ENCODE measurements at regions of chr5 and their contacts with region 1.

Region 1: DNA sequence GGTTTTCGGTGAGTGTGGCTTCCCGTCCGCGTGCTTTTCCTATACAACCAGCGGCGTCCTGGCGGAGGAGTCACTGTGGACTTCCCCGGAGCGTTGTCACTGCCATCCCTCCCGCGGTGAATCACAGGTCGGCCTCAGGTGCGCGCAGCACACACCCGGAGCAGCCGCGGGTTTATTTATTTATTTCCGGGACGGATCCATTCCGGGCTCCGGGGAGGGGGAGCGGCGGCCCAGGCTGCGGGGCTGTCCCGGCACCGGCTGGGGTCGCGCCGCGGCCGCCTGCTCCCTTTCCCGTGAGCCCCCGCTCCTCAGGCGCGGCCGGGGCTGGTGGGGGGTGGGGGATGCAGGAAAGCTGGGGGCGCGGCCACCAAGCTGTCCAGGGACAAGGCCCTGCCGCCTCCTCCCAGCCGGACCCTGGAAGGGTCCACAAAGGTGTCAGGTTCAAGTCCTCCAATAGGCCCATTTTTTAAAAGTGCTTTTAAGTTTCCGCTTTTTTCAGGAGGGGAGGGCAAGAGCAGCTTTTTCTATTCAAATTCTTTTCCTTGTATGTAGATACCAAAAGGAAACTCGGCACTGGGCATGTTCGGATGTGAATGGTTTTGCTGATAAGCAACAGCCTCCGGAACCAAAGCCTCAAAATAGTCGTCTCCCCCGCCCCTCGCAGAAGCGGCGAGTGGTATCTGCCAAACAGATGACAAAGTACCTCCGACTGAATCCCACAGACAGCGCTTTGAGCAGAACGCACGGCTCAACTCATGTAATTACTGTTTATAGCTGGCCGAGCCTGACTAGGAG is 192.5 kb downstream of the CD180 start:
- DNase-seq: peak; percentile 71 to 91 (median 87)
- ATAC-seq: peak; percentile 91
- H3K4me3 ChIP-seq: peak overlapping the region; percentile 97
- H3K4me3 Mint-ChIP-seq: peak overlapping the region; percentile 92 to 99 (median 97)
- H3K27ac ChIP-seq: peak overlapping the region; percentile 75
- H3K27ac Mint-ChIP-seq: peak overlapping the region; percentile 93 to 98 (median 95)
- H3K4me1 ChIP-seq: peaks cover 7 to 28% of the 10 kb centered on the region in 2 donors
- H3K4me1 Mint-ChIP-seq: peaks cover 25 to 62% (median 55%) of the 10 kb centered on the region in 7 donors
- H3K27me3 ChIP-seq: no peaks in the 10 kb centered on the region
- H3K27me3 Mint-ChIP-seq: no peaks in the 10 kb centered on the region

Region 2: GRCh38 chr5:66144074-66144833 is 859.9 kb before region 1 on chr5 and contains the start of gene SREK1:
- CTCF ChIA-PET with region 1: no interaction called
- POLR2A ChIA-PET with region 1: no interaction called
- intact Hi-C with region 1: loop called in 1 of 2 experiments (anchors 1 kb)
- DNase-seq: peak; percentile 84 to 90 (median 89)
- ATAC-seq: peak; percentile 91
- H3K4me3 ChIP-seq: peak within 1 kb of the TSS; percentile 80
- H3K4me3 Mint-ChIP-seq: peak within 1 kb of the TSS; percentile 91 to 100 (median 98)
- H3K27ac ChIP-seq: peak within 1 kb of the TSS; percentile 98
- H3K27ac Mint-ChIP-seq: peak within 1 kb of the TSS; percentile 99 to 100 (median 100)
- H3K4me1 ChIP-seq: peaks cover 21 to 34% of the 10 kb centered on the region in 2 donors
- H3K4me1 Mint-ChIP-seq: peaks cover 22 to 60% (median 47%) of the 10 kb centered on the region in 7 donors
- H3K27me3 ChIP-seq: no peaks in the 10 kb centered on the region
- H3K27me3 Mint-ChIP-seq: no peaks in the 10 kb centered on the region
- total RNA-seq, gene SREK1: 68.2 to 143 (median 85.8) TPM

Region 3: DNA sequence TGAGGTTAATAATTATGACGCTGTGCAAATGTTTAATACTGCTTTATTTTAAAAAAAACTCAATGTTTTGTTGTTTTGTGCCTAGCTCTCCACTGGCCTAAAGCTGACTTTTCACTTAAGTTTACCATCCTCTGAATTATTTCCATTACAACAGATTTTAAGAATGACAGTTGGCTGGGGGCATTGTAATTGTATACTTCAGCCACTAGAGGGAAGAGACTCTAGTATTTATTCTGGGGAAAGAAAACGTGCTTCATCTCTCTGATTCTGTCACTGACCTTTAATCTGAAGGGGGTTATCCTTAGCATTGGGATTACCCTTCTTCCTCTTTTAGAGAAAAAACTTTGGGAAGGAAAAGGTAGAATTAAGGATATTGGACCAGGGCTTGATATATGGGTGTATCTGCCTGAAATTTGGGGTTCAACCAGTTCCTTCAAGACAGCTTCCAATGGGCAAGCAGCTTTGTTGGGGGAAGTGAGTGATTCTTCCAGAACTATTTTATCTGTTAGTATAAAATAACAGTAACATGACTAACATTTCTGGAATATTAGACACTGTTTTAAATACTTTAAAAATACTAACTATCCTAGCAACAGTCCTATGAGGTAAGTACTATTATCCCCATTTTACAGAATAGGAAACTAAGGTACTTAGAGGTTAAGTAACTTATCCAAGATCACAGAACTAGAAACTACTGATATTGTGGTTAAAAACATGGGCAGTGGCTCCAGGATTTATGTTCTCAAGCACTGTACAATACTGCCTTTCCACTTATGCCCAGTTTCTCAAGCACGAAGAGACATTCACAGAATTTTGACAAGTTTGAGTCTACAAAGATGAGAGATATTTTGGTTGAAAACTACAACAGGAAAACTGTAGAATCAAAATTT is 15.9 kb before region 1 on chr5:
- CTCF ChIA-PET with region 1: interaction called, 9 read pairs
- POLR2A ChIA-PET with region 1: interaction called, 5 read pairs
- intact Hi-C with region 1: loop called (anchors 1 kb)
- DNase-seq: peak in 6 of 9 donors; percentile 15 to 52 (median 40)
- ATAC-seq: peak; percentile 80
- H3K4me3 ChIP-seq: no peak overlapping the region
- H3K4me3 Mint-ChIP-seq: no peak overlapping the region
- H3K27ac ChIP-seq: no peak overlapping the region
- H3K27ac Mint-ChIP-seq: no peak overlapping the region
- H3K4me1 ChIP-seq: no peaks in the 10 kb centered on the region
- H3K4me1 Mint-ChIP-seq: peaks cover 0 to 17% (median 5%) of the 10 kb centered on the region in 7 donors
- H3K27me3 ChIP-seq: no peaks in the 10 kb centered on the region
- H3K27me3 Mint-ChIP-seq: peaks cover 0 to 11% (median 0%) of the 10 kb centered on the region in 5 donors

Region 4: DNA sequence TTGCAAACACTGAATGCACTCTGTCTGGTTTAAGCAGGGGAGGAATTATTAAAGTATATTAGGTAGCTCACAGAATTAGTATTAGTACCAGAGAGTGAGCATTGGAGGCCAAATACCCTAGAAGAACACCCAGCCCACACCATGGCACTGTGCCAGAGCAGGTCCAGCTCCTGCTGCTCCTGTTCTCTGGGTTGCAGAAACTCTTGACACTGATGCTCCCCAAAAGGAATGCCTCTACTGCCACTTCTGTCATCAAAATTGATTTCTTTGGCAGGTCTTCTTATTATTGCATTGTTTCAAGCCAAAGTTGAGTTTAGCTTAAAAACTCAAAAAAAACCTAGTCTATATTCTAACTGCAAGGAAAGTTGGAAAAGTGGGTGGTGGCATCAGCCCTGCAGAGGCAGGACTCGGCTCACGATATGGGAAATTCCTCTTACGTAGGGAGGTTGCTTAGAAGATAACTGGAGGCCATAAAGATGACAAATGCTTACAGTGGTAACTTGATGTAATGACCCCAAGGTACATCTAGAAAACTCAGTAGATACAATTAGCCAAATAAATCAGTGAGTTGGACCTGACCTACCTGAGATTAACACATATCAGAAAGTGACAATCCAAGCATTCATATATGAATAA is 69.0 kb after region 1 on chr5:
- CTCF ChIA-PET with region 1: no interaction called
- POLR2A ChIA-PET with region 1: no interaction called
- intact Hi-C with region 1: loop called in 1 of 2 experiments (anchors 5 kb)
- DNase-seq: no peak
- ATAC-seq: no peak
- H3K4me3 ChIP-seq: no peak overlapping the region
- H3K4me3 Mint-ChIP-seq: no peak overlapping the region
- H3K27ac ChIP-seq: no peak overlapping the region
- H3K27ac Mint-ChIP-seq: peak overlapping the region in 1 of 9 donors; percentile 23
- H3K4me1 ChIP-seq: no peaks in the 10 kb centered on the region
- H3K4me1 Mint-ChIP-seq: peaks cover under 1 to 12% (median 3%) of the 10 kb centered on the region in 7 donors
- H3K27me3 ChIP-seq: no peaks in the 10 kb centered on the region
- H3K27me3 Mint-ChIP-seq: no peaks in the 10 kb centered on the region

Region 5: GRCh38 chr5:67165526-67166459 is 161.7 kb after region 1 on chr5:
- CTCF ChIA-PET with region 1: interaction called, 3 read pairs
- POLR2A ChIA-PET with region 1: interaction called, 5 read pairs
- intact Hi-C with region 1: loop called (anchors 1 kb)
- DNase-seq: peak; percentile 56 to 78 (median 70)
- ATAC-seq: peak; percentile 88
- H3K4me3 ChIP-seq: peak overlapping the region; percentile 54
- H3K4me3 Mint-ChIP-seq: peak overlapping the region; percentile 84 to 96 (median 88)
- H3K27ac ChIP-seq: peak overlapping the region; percentile 80
- H3K27ac Mint-ChIP-seq: peak overlapping the region in 8 of 9 donors; percentile 96 to 100 (median 98)
- H3K4me1 ChIP-seq: peaks cover 71 to 73% of the 10 kb centered on the region in 2 donors
- H3K4me1 Mint-ChIP-seq: peaks cover 36 to 83% (median 62%) of the 10 kb centered on the region in 7 donors
- H3K27me3 ChIP-seq: no peaks in the 10 kb centered on the region
- H3K27me3 Mint-ChIP-seq: no peaks in the 10 kb centered on the region

Region 6: DNA sequence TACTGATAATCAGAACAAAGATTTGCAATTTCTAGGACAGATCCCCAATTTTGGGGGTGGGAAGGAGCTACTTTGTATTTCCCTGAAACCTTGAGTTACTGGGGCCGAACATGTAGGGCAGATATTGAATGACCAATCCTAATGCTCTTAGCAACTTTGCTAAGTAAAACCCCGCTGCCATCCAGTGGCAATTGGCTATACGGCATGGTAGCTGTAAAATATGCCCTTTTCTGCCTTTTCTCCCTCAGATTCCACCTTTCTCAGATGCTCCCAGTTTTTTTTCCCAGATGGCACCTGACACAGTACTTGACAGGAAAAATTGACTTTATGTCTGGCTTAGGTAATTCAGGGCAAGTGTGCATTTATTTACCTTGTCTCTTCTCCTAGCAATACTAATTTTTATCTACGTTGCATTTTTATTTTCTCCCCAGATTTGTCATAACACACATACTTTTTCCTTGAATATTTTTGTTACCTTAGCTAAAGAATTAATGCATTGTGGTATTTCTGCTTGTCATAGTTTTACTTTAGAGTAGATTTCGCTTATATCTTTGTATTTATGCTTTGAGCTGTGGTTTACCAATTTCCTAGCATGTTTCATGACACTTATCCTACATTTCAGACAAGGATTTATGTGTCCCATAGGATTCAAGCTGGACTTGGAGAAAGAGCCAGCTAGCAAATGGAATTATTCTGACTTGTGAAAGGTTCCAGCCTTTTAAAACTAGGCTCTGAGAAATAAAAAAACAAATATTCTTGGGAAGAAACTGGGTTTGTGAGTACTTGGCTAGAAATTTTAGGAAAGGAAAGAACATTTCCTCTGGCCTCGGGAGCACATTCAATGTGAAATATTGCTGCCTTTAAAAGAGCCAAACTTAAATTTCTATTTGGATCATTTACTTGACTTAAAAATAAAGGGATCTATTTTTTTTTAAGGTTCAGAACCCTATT is 1248.8 kb after region 1 on chr5:
- CTCF ChIA-PET with region 1: no interaction called
- POLR2A ChIA-PET with region 1: no interaction called
- intact Hi-C with region 1: loop called in 1 of 2 experiments (anchors 10 kb)
- DNase-seq: peak in 5 of 9 donors; percentile 31 to 43 (median 33)
- ATAC-seq: peak; percentile 53
- H3K4me3 ChIP-seq: no peak overlapping the region
- H3K4me3 Mint-ChIP-seq: peak overlapping the region in 5 of 10 donors; percentile 1 to 79 (median 57)
- H3K27ac ChIP-seq: peak overlapping the region; percentile 60
- H3K27ac Mint-ChIP-seq: peak overlapping the region in 8 of 9 donors; percentile 53 to 95 (median 92)
- H3K4me1 ChIP-seq: peaks cover 67 to 77% of the 10 kb centered on the region in 2 donors
- H3K4me1 Mint-ChIP-seq: peaks cover 71 to 98% (median 94%) of the 10 kb centered on the region in 7 donors
- H3K27me3 ChIP-seq: no peaks in the 10 kb centered on the region
- H3K27me3 Mint-ChIP-seq: no peaks in the 10 kb centered on the region

Region 7: DNA sequence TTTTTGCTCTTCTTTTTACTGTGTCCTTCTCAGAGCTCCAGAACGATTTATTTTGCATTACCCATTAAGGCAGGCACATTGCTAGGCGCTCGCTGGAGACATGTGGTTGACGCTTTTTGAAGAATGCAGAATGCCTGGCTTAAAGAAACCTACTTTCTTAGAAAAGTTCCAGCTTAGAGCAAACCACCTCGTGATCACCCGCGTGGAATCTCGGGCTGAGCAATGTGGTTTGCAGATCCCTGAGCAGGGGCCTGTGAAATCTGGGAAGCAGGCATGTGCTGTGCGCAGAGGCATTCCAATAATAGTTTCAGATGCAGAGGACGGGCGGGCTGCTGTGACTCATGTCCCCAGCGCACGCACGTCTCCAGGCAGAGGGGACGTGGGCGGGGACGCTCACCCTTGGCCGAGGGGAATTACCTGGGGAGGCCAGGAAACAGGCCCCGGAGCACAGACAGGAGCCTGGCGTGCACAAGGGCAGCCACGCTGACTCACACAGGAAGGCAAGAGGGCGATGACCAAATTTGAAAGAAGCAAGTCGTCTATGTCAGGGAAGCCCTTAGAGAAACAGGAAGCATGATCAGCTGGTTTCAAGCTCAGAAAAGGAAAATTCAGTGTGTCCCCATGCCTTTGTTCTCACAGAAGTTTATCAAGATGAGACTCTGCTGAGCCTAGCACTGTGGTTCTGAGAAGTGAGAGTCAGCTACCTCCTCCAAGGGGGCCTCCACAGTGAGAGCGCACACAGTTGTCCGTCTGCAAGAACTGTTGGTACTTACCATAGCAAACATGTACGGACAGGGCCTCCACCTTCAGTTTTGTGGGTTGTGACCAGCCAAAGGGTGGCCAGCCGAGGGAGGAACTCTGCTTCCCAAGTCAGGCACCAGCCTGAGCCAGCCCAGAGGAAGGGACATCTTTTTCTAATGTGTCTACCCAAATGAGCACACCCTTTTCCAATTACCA is 1430.1 kb after region 1 on chr5:
- CTCF ChIA-PET with region 1: no interaction called
- POLR2A ChIA-PET with region 1: no interaction called
- intact Hi-C with region 1: loop called in 1 of 2 experiments (anchors 1 kb)
- DNase-seq: peak; percentile 45 to 91 (median 68)
- ATAC-seq: peak; percentile 94
- H3K4me3 ChIP-seq: peak overlapping the region; percentile 36
- H3K4me3 Mint-ChIP-seq: peak overlapping the region; percentile 37 to 81 (median 76)
- H3K27ac ChIP-seq: no peak overlapping the region
- H3K27ac Mint-ChIP-seq: peak overlapping the region; percentile 52 to 92 (median 76)
- H3K4me1 ChIP-seq: peaks cover 17 to 23% of the 10 kb centered on the region in 2 donors
- H3K4me1 Mint-ChIP-seq: peaks cover 23 to 45% (median 34%) of the 10 kb centered on the region in 7 donors
- H3K27me3 ChIP-seq: no peaks in the 10 kb centered on the region
- H3K27me3 Mint-ChIP-seq: peaks cover 0 to 63% (median 0%) of the 10 kb centered on the region in 5 donors

Measured in naive thymus-derived CD4-positive, alpha-beta T cell (primary cell).